Endothelial cell of umbilical vein (primary cell): ENCODE measurements at regions of chr17 and their contacts with region 1.

Region 1: DNA sequence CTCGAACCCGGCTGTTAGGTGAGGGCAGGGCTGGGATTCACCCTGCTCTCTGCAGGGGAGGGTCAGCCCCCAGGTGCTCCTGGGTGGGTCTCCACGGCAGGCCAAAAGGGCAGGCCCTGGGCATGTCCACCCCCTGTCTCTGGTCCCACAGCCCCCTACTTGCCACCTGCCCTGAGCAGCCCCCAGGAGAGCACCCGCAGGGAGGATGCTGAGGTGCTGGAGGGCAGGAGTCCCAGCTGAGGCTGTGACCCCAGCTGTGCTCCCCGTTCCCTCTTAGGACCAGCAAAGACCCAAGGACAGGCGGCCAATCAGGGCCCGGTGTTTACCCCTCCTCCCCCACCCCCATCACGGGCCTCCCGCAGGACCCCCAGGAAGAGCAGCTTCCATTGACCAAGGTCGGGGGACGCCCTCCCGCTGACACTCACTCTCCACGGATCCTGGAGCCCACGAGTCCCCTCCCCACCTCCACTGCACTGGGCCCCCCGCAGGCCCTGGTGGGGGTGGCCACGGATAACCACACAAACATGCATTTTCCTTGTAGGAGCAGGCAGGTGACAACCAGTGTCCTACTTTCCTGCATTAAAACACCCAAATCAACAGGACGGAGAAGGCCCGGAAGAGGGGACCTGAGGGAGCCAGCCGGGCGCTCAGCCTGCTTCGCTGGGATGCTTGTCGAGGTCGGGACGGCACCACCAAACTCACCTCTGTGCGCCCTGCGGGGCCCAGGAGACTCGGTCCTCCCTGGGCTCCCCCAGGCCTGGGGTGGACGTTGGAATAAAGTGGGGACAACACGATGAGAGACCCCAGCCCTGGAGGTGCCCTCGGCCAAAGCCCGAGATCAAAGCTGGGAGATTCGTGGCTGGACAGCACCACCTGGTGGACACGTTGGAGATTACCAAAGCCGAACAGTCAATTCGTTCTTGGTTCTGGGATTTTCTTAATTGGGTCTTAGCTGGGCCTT is 22.5 kb upstream of the ENPP7 start:
- DNase-seq: peak; percentile 35
- H3K4me3 ChIP-seq: no peak overlapping the region
- H3K27ac ChIP-seq: no peak overlapping the region
- H3K4me1 ChIP-seq: no peaks in the 10 kb centered on the region
- H3K27me3 ChIP-seq: no peaks in the 10 kb centered on the region
- CTCF ChIP-seq: peak; percentile 57 to 75
- POLR2A ChIP-seq: no peak

Region 2: GRCh38 chr17:79400989-79401703 is 307.1 kb before region 1 on chr17:
- CTCF ChIA-PET with region 1: interaction called, 11 read pairs
- POLR2A ChIA-PET with region 1: no interaction called
- dilution Hi-C with region 1: no loop called
- intact Hi-C with region 1: loop called (anchors 1 kb)
- DNase-seq: peak; percentile 73
- H3K4me3 ChIP-seq: no peak overlapping the region
- H3K27ac ChIP-seq: no peak overlapping the region
- H3K4me1 ChIP-seq: peaks cover 4% of the 10 kb centered on the region
- H3K27me3 ChIP-seq: peaks cover 6 to 10% of the 10 kb centered on the region in 2 experiments
- CTCF ChIP-seq: peak; percentile 87 to 92
- POLR2A ChIP-seq: no peak

Region 3: GRCh38 chr17:79612468-79613194 is 95.6 kb before region 1 on chr17:
- CTCF ChIA-PET with region 1: no interaction called
- POLR2A ChIA-PET with region 1: no interaction called
- dilution Hi-C with region 1: no loop called
- intact Hi-C with region 1: loop called (anchors 5 kb)
- DNase-seq: peak; percentile 24
- H3K4me3 ChIP-seq: no peak overlapping the region
- H3K27ac ChIP-seq: no peak overlapping the region
- H3K4me1 ChIP-seq: no peaks in the 10 kb centered on the region
- H3K27me3 ChIP-seq: peaks cover 22 to 40% of the 10 kb centered on the region in 2 experiments
- CTCF ChIP-seq: peak; percentile 80 to 86
- POLR2A ChIP-seq: no peak

Region 4: DNA sequence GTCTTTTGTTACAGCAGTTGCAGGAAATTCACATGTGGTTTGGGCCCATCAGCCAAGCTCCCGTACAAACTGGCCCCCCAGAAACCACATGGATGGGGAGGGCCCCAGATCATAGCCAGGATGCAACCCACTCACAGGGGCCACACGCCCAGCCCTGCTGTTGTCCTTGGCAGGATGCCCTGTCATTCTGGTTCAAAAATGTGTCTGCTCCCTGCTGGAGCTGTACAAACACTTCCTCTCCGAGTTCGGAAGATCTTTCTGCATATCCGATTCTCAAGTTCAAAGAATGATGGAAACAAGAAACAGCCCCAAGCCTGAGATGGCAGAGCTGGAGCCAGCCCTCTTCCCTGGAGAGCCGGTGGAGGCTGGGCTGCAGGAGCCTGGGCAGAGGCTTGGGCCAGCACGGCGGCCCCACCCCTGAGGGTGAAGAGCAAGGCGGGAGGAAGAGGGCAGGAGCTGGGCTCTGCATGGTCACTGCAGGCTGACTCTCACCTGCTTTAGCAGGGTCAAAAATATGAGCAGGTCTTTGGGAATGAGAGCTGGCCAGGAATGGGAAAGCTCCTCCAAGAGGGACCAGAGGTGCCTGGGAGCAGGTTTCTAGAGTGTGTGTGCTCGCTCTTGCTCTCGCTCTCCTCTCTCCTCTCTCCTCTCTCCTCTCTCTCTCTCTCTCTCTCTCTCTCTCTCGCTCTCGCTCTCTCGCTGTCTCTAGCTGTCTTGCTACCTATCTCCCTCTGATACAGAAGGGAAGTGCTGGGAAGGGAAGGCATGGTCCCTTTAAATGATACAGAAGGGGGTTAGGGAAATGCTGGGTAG is 12.2 kb before region 1 on chr17:
- CTCF ChIA-PET with region 1: interaction called, 23 read pairs
- POLR2A ChIA-PET with region 1: no interaction called
- dilution Hi-C with region 1: no loop called
- intact Hi-C with region 1: no loop called
- DNase-seq: peak; percentile 39
- H3K4me3 ChIP-seq: no peak overlapping the region
- H3K27ac ChIP-seq: no peak overlapping the region
- H3K4me1 ChIP-seq: peaks cover 3% of the 10 kb centered on the region
- H3K27me3 ChIP-seq: peaks cover 0 to 2% of the 10 kb centered on the region in 2 experiments
- CTCF ChIP-seq: no peak
- POLR2A ChIP-seq: no peak

Region 5: DNA sequence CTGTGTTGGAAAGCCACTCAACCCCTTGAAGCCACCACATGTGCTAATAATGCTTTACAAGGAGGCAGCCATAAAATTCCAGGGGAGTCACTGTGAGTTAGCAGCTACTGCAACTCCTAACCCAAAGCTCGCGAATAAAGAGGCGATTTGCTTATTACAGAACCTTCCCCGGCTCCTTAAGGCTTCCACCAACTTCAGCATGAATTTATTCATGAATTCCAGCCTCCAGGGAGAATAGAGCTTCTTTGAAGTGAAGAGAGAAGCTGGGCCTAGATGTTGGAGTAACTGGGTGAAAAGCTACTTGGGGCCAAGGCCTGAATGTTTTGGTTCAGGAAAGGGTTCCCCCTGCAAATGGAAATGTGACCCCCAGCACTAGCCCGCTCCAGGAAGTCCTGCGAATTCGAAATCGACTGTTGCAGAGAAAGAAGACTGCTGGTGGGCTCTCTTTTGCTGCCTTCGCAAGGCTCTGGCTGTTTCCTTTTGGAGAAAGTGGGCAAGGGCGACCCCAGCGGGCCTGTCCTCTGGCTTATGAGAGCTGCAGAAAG is 80.8 kb after region 1 on chr17:
- CTCF ChIA-PET with region 1: no interaction called
- POLR2A ChIA-PET with region 1: no interaction called
- dilution Hi-C with region 1: no loop called
- intact Hi-C with region 1: no loop called
- DNase-seq: no peak
- H3K4me3 ChIP-seq: no peak overlapping the region
- H3K27ac ChIP-seq: no peak overlapping the region
- H3K4me1 ChIP-seq: peaks cover 6% of the 10 kb centered on the region
- H3K27me3 ChIP-seq: peaks cover 40 to 57% of the 10 kb centered on the region in 2 experiments
- CTCF ChIP-seq: no peak
- POLR2A ChIP-seq: no peak

Region 6: DNA sequence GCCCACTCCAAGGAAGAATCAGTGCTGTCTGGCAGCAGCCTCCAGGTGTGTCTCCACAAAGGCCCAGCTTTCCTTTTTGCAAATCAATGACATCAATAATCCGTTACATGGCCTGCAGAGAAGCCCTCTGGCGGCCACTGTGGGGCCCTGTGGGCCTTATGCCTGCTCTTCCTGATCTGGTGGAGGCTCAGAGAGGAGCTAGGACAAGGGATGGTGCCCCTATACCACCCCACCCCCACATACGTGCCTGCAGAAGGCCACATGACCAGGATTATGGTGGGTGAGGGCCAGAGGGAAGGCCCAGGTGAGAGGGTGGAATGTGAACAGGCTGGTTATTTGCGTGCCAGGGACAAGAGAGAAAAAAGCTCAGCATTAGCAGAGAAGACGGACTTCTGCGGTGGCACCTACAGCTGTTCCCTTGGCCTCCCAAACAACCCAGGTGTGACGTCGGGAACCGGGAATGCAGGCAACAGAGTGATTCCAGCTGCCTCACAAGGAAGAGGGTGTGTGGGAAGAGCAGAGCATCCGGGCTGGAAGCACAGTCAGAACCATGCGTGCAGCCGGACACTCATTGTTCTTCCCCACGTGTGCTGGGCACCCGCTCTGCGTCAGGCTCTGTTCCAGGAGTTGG is 416.3 kb after region 1 on chr17:
- CTCF ChIA-PET with region 1: no interaction called
- POLR2A ChIA-PET with region 1: no interaction called
- dilution Hi-C with region 1: no loop called
- intact Hi-C with region 1: no loop called
- DNase-seq: peak; percentile 23
- H3K4me3 ChIP-seq: no peak overlapping the region
- H3K27ac ChIP-seq: no peak overlapping the region
- H3K4me1 ChIP-seq: no peaks in the 10 kb centered on the region
- H3K27me3 ChIP-seq: peaks cover 18 to 19% of the 10 kb centered on the region in 2 experiments
- CTCF ChIP-seq: peak; percentile 25 to 66
- POLR2A ChIP-seq: no peak